ENCODE measurements at regions of chr12 and their contacts with region 1.

Region 1: GRCh38 chr12:53984901-53985709 is at the start of gene HOXC10:
- DNase-seq: peak; percentile 58 to 77
- H3K4me3 ChIP-seq: peak within 1 kb of the TSS; percentile 8; the same call in 1 of the 2 replicates
- H3K27ac ChIP-seq: no peak within 1 kb of the TSS
- H3K4me1 ChIP-seq: peaks cover 22% of the 10 kb centered on the region
- H3K27me3 ChIP-seq: no peaks in the 10 kb centered on the region
- CTCF ChIP-seq: peak; percentile 68
- total RNA-seq, gene HOXC10: 1.1 and 1.4 TPM in 2 replicates

Region 2: DNA sequence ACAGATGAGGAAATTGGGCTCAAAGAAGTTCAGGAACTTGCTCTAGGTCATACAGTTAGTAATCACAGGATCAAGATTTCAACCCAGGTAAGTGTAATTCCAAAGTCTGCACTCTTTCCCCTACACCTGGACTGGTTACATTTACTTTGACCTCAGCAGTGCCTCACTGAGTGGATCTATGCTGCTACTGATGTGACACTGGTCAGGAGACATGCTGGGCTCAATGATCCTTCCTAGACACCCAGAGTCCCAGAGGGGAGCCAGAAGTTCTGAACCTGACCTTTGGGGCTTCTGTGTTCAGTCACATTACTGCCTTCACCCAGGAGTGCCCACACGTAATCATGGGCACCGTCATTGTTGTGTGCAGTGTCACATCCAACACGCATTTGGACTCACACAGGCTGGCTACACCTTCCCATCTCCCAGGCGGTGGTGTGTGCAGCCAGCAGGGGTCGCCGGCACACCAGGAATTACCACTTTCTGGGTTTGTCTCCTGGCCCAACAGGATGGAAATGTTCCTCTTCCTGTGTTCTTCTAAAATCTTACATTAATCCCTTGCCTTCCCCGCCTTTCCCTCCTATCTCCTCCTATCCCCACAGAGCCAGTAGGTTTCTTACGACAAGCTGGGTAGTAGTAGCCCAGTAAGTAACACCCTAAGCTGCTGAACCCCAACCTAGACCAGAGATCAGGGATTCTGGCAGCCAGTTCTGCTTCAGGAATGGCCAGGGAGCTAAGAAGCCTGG is 283.4 kb before region 1 on chr12:
- CTCF ChIA-PET with region 1: no interaction called
- POLR2A ChIA-PET with region 1: no interaction called
- intact Hi-C with region 1: loop called (anchors 5 kb)
- DNase-seq: peak in 1 of 2 experiments; percentile 79
- H3K4me3 ChIP-seq: no peak overlapping the region
- H3K27ac ChIP-seq: no peak overlapping the region
- H3K4me1 ChIP-seq: peaks cover 3% of the 10 kb centered on the region; the same call in 1 of the 2 replicates
- H3K27me3 ChIP-seq: peaks cover 22% of the 10 kb centered on the region
- CTCF ChIP-seq: peak; percentile 82

Region 3: DNA sequence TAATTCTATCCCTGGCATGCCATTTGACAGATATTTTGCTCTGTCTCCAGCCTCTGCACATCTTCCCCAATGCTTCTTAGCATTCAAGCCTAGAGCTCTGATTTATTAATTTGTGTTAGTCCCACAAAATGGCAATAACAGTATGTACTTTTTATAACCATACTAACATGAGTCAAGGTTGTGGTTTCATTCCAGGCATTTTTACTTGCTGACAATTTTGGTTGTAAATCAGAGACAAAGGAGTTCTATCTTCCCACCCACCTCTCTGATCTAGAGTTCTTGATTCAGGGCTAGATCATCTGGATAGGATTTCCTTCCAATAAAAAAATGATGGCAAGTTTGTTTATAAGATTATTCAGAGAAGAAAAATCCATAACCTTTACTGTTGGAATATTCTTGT is 214.8 kb before region 1 on chr12:
- CTCF ChIA-PET with region 1: interaction called, 6 read pairs
- POLR2A ChIA-PET with region 1: no interaction called
- intact Hi-C with region 1: loop called (anchors 2 kb)
- DNase-seq: peak in 1 of 2 experiments; percentile 92
- H3K4me3 ChIP-seq: no peak overlapping the region
- H3K27ac ChIP-seq: peak overlapping the region; percentile 53
- H3K4me1 ChIP-seq: peaks cover 39% of the 10 kb centered on the region
- H3K27me3 ChIP-seq: no peaks in the 10 kb centered on the region
- CTCF ChIP-seq: no peak

Region 4: DNA sequence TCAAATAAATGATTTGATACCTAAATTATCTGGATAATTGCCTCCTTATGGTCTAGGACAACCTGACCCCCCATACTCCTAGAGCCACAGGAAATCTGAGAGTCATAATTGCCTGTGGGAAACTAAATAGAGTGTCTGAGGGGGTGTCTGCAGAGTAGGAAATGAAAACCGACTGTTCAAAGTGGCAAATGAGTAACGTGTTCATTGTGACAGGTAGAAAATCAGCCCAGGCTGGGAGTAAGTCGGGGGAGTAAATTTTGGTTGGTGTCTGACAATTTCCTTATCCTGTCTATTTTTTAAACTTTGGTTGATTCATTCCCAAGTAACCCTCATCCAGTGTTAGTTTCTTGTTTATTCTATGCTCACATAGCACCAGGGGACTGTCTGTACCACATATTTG is 98.1 kb before region 1 on chr12:
- CTCF ChIA-PET with region 1: interaction called, 13 read pairs
- POLR2A ChIA-PET with region 1: no interaction called
- intact Hi-C with region 1: no loop called
- DNase-seq: no peak
- H3K4me3 ChIP-seq: no peak overlapping the region
- H3K27ac ChIP-seq: no peak overlapping the region
- H3K4me1 ChIP-seq: no peaks in the 10 kb centered on the region
- H3K27me3 ChIP-seq: no peaks in the 10 kb centered on the region
- CTCF ChIP-seq: no peak

Region 5: GRCh38 chr12:54201001-54201794 is 216.1 kb after region 1 on chr12:
- CTCF ChIA-PET with region 1: interaction called, 6 read pairs
- POLR2A ChIA-PET with region 1: interaction called, 5 read pairs
- intact Hi-C with region 1: loop called (anchors 1 kb)
- DNase-seq: peak; percentile 52 to 75
- H3K4me3 ChIP-seq: no peak overlapping the region
- H3K27ac ChIP-seq: no peak overlapping the region
- H3K4me1 ChIP-seq: 0 out of 2 replicates have a peak, but pooled peaks cover under 1% of the 10 kb centered on the region
- H3K27me3 ChIP-seq: no peaks in the 10 kb centered on the region
- CTCF ChIP-seq: peak; percentile 93